SK-N-SH (cell line): ENCODE measurements at regions of chr17 and their contacts with region 1.

Region 1: DNA sequence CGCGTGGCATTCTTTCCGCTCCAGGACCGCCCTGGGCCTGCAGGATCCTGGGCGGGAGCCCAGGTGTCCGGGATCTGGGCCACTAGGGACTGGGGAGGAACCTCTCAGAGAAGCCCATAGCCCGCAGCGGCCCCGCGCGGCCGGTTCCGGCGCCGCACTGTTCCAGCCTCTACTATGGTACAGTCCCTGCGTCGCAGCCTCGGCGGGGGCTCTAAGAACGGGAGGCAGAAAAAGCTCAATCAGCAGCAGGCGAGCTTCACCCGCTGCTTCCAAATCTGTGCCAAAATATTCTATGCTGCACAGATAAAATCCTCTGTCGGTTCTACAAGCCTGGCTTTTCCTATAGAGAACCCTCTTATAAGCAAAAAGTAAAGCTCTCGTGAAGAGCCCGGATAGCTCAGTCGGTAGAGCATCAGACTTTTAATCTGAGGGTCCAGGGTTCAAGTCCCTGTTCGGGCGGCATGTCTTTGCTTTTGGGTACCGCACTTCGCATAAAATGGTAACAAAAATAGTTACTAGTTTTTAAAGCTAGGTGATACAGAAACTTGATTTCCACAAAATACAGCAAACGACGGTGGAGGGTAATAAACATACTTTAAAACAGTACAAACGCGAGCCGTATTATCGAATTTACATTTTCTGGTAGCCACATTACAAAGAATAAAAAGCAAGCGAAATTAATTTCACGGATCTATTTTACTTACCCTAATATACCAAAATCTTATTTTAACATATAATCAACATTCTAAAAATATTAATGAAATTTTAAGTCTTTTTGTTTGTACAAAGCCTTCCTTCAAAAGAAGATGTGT is 661 bp upstream of the ALOXE3 start:
- DNase-seq: peak; percentile 87
- H3K4me3 ChIP-seq: peak overlapping the region; percentile 53 to 79
- H3K27ac ChIP-seq: peak overlapping the region; percentile 62 to 63
- H3K4me1 ChIP-seq: peaks cover 0 to 28% of the 10 kb centered on the region in 2 experiments; a peak in 2 of 4 replicates
- H3K27me3 ChIP-seq: peaks cover 23% of the 10 kb centered on the region; the same call in 1 of the 2 replicates
- CTCF ChIP-seq: peak; percentile 94
- EP300 ChIP-seq: no peak; a peak in 1 of 4 replicates
- RAD21 ChIP-seq: peak; percentile 57

Region 2: DNA sequence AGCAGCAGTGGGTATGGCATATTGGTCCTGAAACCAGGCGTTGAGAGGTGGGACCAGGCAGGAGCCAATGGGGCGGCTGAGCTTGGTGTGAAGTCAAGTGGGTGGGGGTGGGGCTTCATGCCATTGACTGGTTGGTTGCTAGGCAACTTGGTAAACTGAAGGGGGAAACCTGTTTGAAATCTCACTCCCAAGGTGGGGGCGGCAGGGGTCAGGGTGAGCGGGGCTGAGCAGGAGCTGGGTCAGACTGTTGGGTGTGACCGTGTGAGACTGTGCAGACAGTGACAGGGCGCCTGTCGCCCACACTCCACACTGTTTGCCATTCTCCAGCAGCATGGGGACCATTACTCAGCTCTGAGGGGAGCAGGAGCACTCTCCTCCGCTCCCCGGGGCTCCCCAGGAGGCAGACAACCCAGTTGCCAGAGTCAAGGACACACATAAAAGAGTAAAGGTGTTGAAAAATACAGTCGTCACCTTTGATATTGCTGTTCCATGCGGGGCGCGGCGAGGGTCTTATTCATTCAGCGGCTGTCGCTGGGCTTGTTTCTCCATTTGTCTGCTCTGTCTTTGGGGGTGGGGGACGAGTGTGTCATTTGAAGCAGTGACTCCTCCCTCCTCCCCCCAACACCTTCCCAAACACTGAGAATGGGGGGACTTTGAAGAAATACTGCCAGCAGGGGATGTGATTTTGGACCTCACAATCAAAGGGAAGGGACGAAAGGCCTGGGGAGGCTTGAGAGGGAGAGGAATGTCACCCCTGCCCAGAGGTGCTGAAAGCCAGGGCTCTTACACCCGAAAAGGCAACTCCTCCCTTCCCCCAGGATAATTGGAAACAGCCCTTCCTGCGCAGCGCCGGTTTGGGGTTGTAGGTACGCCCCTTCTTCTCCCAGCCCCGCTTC is 415.1 kb before region 1 on chr17:
- CTCF ChIA-PET with region 1: no interaction called
- POLR2A ChIA-PET with region 1: no interaction called
- DNase-seq: peak; percentile 86
- H3K4me3 ChIP-seq: peak overlapping the region; percentile 75 to 80
- H3K27ac ChIP-seq: peak overlapping the region; percentile 47 to 86; a peak in 3 of 4 replicates
- H3K4me1 ChIP-seq: peaks cover 9 to 35% of the 10 kb centered on the region in 2 experiments
- H3K27me3 ChIP-seq: no peaks in the 10 kb centered on the region
- CTCF ChIP-seq: no peak
- EP300 ChIP-seq: 0 out of 4 replicates have a peak, but pooled peaks of 1 of the 2 experiments have one; percentile 26
- RAD21 ChIP-seq: no peak

Region 3: GRCh38 chr17:8073627-8074484 is 45.1 kb before region 1 on chr17:
- CTCF ChIA-PET with region 1: interaction called, 75 read pairs
- POLR2A ChIA-PET with region 1: no interaction called
- DNase-seq: peak; percentile 89
- H3K4me3 ChIP-seq: peak overlapping the region in 1 of 2 experiments; percentile 26; a peak in 1 of 4 replicates
- H3K27ac ChIP-seq: no peak overlapping the region
- H3K4me1 ChIP-seq: peaks cover 0 to 8% of the 10 kb centered on the region in 2 experiments; a peak in 1 of 4 replicates
- H3K27me3 ChIP-seq: peaks cover 64% of the 10 kb centered on the region
- CTCF ChIP-seq: peak; percentile 89
- EP300 ChIP-seq: no peak
- RAD21 ChIP-seq: peak; percentile 41

Region 4: GRCh38 chr17:8091033-8091687 is 27.8 kb before region 1 on chr17:
- CTCF ChIA-PET with region 1: interaction called, 298 read pairs
- POLR2A ChIA-PET with region 1: no interaction called
- DNase-seq: no peak
- H3K4me3 ChIP-seq: no peak overlapping the region
- H3K27ac ChIP-seq: no peak overlapping the region
- H3K4me1 ChIP-seq: no peaks in the 10 kb centered on the region
- H3K27me3 ChIP-seq: peaks cover 62% of the 10 kb centered on the region; the same call in 1 of the 2 replicates
- CTCF ChIP-seq: no peak
- EP300 ChIP-seq: no peak
- RAD21 ChIP-seq: no peak

Region 5: GRCh38 chr17:8131844-8132441 is 13.0 kb after region 1 on chr17:
- CTCF ChIA-PET with region 1: interaction called, 46 read pairs
- POLR2A ChIA-PET with region 1: no interaction called
- DNase-seq: no peak
- H3K4me3 ChIP-seq: no peak overlapping the region
- H3K27ac ChIP-seq: no peak overlapping the region
- H3K4me1 ChIP-seq: peaks cover 0 to 2% of the 10 kb centered on the region in 2 experiments; a peak in 1 of 4 replicates
- H3K27me3 ChIP-seq: no peaks in the 10 kb centered on the region; the same call in 1 of the 2 replicates
- CTCF ChIP-seq: no peak
- EP300 ChIP-seq: no peak
- RAD21 ChIP-seq: no peak

Region 6: GRCh38 chr17:8151123-8151640 is 32.2 kb after region 1 on chr17:
- CTCF ChIA-PET with region 1: interaction called, 15 read pairs
- POLR2A ChIA-PET with region 1: no interaction called
- DNase-seq: peak; percentile 93
- H3K4me3 ChIP-seq: peak overlapping the region; percentile 77 to 80
- H3K27ac ChIP-seq: peak overlapping the region; percentile 82 to 95
- H3K4me1 ChIP-seq: peaks cover 36 to 42% of the 10 kb centered on the region in 2 experiments; a peak in 3 of 4 replicates
- H3K27me3 ChIP-seq: no peaks in the 10 kb centered on the region
- CTCF ChIP-seq: no peak
- EP300 ChIP-seq: no peak
- RAD21 ChIP-seq: no peak

Region 7: DNA sequence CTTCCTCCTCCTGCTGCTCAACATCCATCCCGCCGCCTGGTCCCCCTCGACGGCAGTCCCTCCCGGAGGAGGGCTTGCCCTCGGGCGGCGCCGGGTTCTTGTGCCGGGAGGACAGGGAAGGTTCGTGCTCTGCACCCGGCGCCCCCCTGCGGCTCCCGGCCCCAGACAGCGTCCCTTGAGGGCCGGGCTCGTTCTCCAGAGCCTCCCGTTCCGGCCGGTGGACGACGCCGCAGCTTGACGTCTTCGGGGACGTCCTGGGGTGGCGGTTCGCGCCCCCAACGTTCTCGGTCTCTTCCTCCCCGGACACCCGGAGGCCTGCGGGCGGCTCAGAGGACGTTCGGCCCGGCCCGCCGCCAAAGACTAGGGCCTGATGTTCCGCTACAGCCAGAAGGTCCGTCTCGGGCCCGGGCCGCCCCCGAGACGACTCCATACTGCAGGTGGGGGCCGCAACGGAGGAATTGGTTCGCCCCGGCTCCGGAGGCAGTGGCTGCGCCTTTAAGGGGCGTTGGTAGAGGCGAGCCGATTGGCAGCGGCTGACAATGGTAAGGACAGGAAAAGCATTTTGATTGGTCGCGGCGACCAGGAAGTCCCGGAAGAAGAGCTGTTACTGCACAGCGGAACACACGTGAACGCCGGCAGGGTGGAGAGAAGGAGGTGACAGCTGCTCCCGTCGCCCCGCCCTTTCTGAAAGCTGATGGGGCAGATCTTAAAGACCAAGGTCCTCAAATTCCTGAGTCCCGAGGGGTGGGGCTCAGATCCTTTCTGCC is 70.9 kb after region 1 on chr17 and contains the start of gene BORCS6:
- CTCF ChIA-PET with region 1: interaction called, 32 read pairs
- POLR2A ChIA-PET with region 1: interaction called, 3 read pairs
- DNase-seq: peak; percentile 86
- H3K4me3 ChIP-seq: peak within 1 kb of the TSS; percentile 79 to 86
- H3K27ac ChIP-seq: peak within 1 kb of the TSS; percentile 79 to 80
- H3K4me1 ChIP-seq: peaks cover 9 to 33% of the 10 kb centered on the region in 2 experiments; a peak in 3 of 4 replicates
- H3K27me3 ChIP-seq: no peaks in the 10 kb centered on the region
- CTCF ChIP-seq: peak; percentile 23
- EP300 ChIP-seq: no peak
- RAD21 ChIP-seq: no peak
- polyA plus RNA-seq, gene BORCS6: 3.7 and 4.3 TPM in 2 replicates

Region 8: GRCh38 chr17:8300627-8301242 is 181.8 kb after region 1 on chr17:
- CTCF ChIA-PET with region 1: interaction called, 10 read pairs
- POLR2A ChIA-PET with region 1: no interaction called
- DNase-seq: peak; percentile 83
- H3K4me3 ChIP-seq: peak overlapping the region in 1 of 2 experiments; percentile 0; a peak in 1 of 4 replicates
- H3K27ac ChIP-seq: no peak overlapping the region
- H3K4me1 ChIP-seq: no peaks in the 10 kb centered on the region
- H3K27me3 ChIP-seq: no peaks in the 10 kb centered on the region
- CTCF ChIP-seq: peak; percentile 86
- EP300 ChIP-seq: no peak
- RAD21 ChIP-seq: peak; percentile 91